Naive thymus-derived CD4-positive, alpha-beta T cell (primary cell): ENCODE measurements at regions of chr2 and their contacts with region 1.

Region 1: GRCh38 chr2:231604685-231605606 is 12.3 kb downstream of the TEX44 start:
- DNase-seq: peak; percentile 80 to 97 (median 88)
- ATAC-seq: peak; percentile 89
- H3K4me3 ChIP-seq: peak overlapping the region; percentile 36
- H3K4me3 Mint-ChIP-seq: peak overlapping the region; percentile 58 to 77 (median 72)
- H3K27ac ChIP-seq: peak overlapping the region; percentile 89
- H3K27ac Mint-ChIP-seq: peak overlapping the region in 8 of 9 donors; percentile 50 to 93 (median 90)
- H3K4me1 ChIP-seq: peaks cover 0 to 9% of the 10 kb centered on the region in 2 donors
- H3K4me1 Mint-ChIP-seq: peaks cover 0 to 14% (median 4%) of the 10 kb centered on the region in 7 donors
- H3K27me3 ChIP-seq: no peaks in the 10 kb centered on the region
- H3K27me3 Mint-ChIP-seq: peaks cover 0 to 9% (median 0%) of the 10 kb centered on the region in 5 donors

Region 2: DNA sequence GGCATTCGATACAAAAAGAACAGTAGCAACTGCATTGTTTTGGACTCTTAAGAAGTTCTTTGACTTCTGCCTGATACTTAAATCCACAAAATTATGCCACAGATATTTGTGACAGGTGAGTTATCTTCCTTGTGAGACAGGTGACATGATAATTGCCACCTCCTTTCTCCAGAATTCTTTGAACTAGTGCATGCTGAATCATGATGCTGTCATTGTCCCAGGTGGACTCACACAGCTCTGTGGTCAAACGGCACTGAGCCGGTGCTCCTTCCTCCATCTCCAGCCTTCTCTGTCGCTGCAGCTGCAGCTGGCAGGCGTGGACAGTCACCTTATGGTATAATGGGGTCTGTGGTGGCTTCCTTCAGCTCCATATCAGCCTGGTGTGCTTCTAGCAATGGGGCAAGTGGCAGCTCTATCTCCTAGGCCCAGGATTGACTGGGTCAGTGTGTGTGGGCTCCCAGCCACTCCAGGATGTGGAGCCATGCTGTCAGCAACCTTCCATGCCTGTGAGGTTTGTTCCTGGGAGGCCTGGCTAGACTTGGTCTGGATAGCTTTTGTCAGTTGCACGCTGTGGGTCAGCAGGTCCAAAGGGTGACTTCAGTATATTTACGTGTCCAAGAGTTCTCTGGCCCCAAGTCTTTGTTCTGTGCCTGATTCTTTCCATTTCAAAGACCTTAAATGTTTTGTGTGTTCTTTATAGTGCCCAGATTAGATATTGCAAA is 390.9 kb before region 1 on chr2:
- CTCF ChIA-PET with region 1: no interaction called
- POLR2A ChIA-PET with region 1: no interaction called
- intact Hi-C with region 1: no loop called
- DNase-seq: no peak
- ATAC-seq: no peak
- H3K4me3 ChIP-seq: no peak overlapping the region
- H3K4me3 Mint-ChIP-seq: no peak overlapping the region
- H3K27ac ChIP-seq: no peak overlapping the region
- H3K27ac Mint-ChIP-seq: no peak overlapping the region
- H3K4me1 ChIP-seq: no peaks in the 10 kb centered on the region
- H3K4me1 Mint-ChIP-seq: no peaks in the 10 kb centered on the region
- H3K27me3 ChIP-seq: no peaks in the 10 kb centered on the region
- H3K27me3 Mint-ChIP-seq: no peaks in the 10 kb centered on the region

Region 3: GRCh38 chr2:231227309-231228162 is 377.4 kb before region 1 on chr2:
- CTCF ChIA-PET with region 1: no interaction called
- POLR2A ChIA-PET with region 1: no interaction called
- intact Hi-C with region 1: loop called in 1 of 2 experiments (anchors 1 kb)
- DNase-seq: peak in 8 of 9 donors; percentile 21 to 55 (median 34)
- ATAC-seq: peak; percentile 95
- H3K4me3 ChIP-seq: no peak overlapping the region
- H3K4me3 Mint-ChIP-seq: no peak overlapping the region
- H3K27ac ChIP-seq: no peak overlapping the region
- H3K27ac Mint-ChIP-seq: peak overlapping the region in 1 of 9 donors; percentile 5
- H3K4me1 ChIP-seq: no peaks in the 10 kb centered on the region
- H3K4me1 Mint-ChIP-seq: no peaks in the 10 kb centered on the region
- H3K27me3 ChIP-seq: peaks cover 0 to 3% of the 10 kb centered on the region in 2 donors
- H3K27me3 Mint-ChIP-seq: no peaks in the 10 kb centered on the region

Region 4: GRCh38 chr2:231394211-231395141 is 210.5 kb before region 1 on chr2:
- CTCF ChIA-PET with region 1: no interaction called
- POLR2A ChIA-PET with region 1: no interaction called
- intact Hi-C with region 1: no loop called
- DNase-seq: no peak
- ATAC-seq: peak; percentile 46
- H3K4me3 ChIP-seq: no peak overlapping the region
- H3K4me3 Mint-ChIP-seq: peak overlapping the region; percentile 37 to 75 (median 60)
- H3K27ac ChIP-seq: no peak overlapping the region
- H3K27ac Mint-ChIP-seq: no peak overlapping the region
- H3K4me1 ChIP-seq: peaks cover 0 to 10% of the 10 kb centered on the region in 2 donors
- H3K4me1 Mint-ChIP-seq: peaks cover 0 to 29% (median 8%) of the 10 kb centered on the region in 7 donors
- H3K27me3 ChIP-seq: no peaks in the 10 kb centered on the region
- H3K27me3 Mint-ChIP-seq: peaks cover 18 to 56% (median 23%) of the 10 kb centered on the region in 5 donors

Region 5: GRCh38 chr2:231482806-231483391 is 122.0 kb before region 1 on chr2:
- CTCF ChIA-PET with region 1: no interaction called
- POLR2A ChIA-PET with region 1: interaction called, 3 read pairs
- intact Hi-C with region 1: loop called (anchors 1 kb)
- DNase-seq: peak; percentile 52 to 82 (median 70)
- ATAC-seq: peak; percentile 86
- H3K4me3 ChIP-seq: peak overlapping the region; percentile 73
- H3K4me3 Mint-ChIP-seq: peak overlapping the region; percentile 62 to 87 (median 82)
- H3K27ac ChIP-seq: peak overlapping the region; percentile 83
- H3K27ac Mint-ChIP-seq: peak overlapping the region; percentile 81 to 96 (median 89)
- H3K4me1 ChIP-seq: peaks cover 0 to 4% of the 10 kb centered on the region in 2 donors
- H3K4me1 Mint-ChIP-seq: peaks cover 0 to 18% (median 11%) of the 10 kb centered on the region in 7 donors
- H3K27me3 ChIP-seq: no peaks in the 10 kb centered on the region
- H3K27me3 Mint-ChIP-seq: no peaks in the 10 kb centered on the region

Region 6: GRCh38 chr2:231530091-231531011 is 74.6 kb before region 1 on chr2 and contains the start of gene NMUR1:
- CTCF ChIA-PET with region 1: no interaction called
- POLR2A ChIA-PET with region 1: no interaction called
- intact Hi-C with region 1: loop called in 1 of 2 experiments (anchors 1 kb)
- DNase-seq: peak; percentile 33 to 86 (median 59)
- ATAC-seq: peak; percentile 95
- H3K4me3 ChIP-seq: peak within 1 kb of the TSS; percentile 33
- H3K4me3 Mint-ChIP-seq: peak within 1 kb of the TSS in 9 of 10 donors; percentile 29 to 83 (median 50)
- H3K27ac ChIP-seq: no peak within 1 kb of the TSS
- H3K27ac Mint-ChIP-seq: peak within 1 kb of the TSS in 3 of 9 donors; percentile 21 to 60 (median 36)
- H3K4me1 ChIP-seq: peaks cover 0 to 20% of the 10 kb centered on the region in 2 donors
- H3K4me1 Mint-ChIP-seq: peaks cover 0 to 28% (median 7%) of the 10 kb centered on the region in 7 donors
- H3K27me3 ChIP-seq: no peaks in the 10 kb centered on the region
- H3K27me3 Mint-ChIP-seq: peaks cover 15 to 39% (median 18%) of the 10 kb centered on the region in 5 donors
- total RNA-seq, gene NMUR1: 0.72 to 7.0 (median 1.4) TPM in 3 of 5 experiments, not detected in the others

Region 7: DNA sequence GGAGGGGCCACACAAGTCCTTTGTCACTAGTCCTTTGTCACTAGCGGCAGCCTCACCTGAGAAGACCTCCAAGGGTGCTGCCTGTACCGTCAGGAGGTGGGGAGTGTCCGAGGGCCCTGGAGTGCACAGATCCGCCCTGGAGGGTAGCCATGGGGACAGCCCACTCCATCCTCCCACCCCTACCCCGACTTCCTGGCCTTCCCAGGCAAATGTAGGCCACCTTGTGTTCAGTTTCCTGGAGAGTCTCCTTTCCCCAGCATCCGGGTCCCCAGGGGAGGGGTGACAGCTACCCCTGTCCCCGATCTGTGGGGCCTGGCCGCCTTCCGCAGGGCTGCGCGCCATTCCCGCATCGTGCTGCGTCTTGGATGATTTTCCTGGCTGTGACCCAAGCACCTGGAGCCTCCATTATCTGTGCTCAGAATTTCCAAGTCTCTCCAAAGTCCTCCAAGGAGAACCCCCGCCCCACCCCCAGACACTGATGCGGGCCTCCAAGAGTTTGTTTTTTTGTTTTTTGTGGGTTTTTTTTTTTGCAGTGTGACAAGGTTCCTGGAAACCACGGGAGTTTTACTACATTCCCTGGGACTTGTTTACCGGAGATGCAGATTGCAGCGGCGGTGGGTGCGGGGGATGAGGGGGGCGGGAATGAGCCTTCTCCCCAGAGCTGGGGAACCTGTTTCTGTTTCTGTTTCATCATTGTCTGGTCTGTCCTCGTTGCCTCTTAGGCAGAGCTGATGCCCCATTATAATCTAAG is 16.4 kb after region 1 on chr2:
- CTCF ChIA-PET with region 1: no interaction called
- POLR2A ChIA-PET with region 1: no interaction called
- intact Hi-C with region 1: no loop called
- DNase-seq: no peak
- ATAC-seq: no peak
- H3K4me3 ChIP-seq: no peak overlapping the region
- H3K4me3 Mint-ChIP-seq: peak overlapping the region in 1 of 10 donors; percentile 44
- H3K27ac ChIP-seq: no peak overlapping the region
- H3K27ac Mint-ChIP-seq: peak overlapping the region in 1 of 9 donors; percentile 85
- H3K4me1 ChIP-seq: no peaks in the 10 kb centered on the region
- H3K4me1 Mint-ChIP-seq: peaks cover 0 to 54% (median 12%) of the 10 kb centered on the region in 7 donors
- H3K27me3 ChIP-seq: no peaks in the 10 kb centered on the region
- H3K27me3 Mint-ChIP-seq: no peaks in the 10 kb centered on the region

Region 8: DNA sequence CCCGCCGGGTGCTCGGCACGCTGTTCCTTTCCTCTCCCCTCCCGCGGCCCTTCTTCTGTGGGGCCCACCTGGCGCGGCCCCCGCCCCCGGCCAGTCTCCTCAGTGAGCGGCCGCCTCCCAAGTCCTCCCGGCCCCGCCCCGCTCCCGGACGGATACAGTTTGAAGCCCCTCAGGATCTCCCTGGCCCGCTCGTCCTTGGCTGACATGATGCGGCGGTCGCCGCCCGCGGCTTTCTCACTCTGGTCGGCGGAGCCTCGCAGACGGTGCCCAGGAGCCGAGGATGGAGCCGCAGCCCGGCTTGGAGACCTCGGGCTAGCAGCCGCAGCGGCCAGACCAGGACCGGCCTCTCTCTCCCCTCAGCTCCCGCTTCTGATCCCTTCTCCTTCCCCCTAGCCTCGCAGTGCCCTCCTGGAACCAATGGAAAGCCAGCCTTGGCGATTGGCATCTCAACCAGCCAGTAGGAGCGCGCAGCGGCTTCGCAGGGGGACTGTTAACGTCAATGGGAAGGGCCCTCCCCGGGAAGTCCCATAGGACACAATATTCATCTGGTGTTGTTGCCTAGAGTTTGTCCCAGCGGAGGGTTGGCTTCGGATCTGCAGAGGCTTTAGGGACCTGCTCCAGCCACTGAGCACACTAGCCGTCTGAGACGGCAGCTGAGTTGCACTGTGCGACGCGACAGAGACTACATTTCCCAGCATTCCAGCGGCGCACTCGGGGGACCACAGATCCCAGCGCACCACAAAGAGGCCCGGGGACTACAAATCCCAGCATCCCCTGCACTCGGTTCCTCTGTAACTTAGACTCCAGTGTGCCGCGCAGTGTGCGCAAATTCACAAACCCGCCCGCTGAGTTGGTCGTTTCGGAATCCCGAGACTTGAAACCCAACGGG is 176.2 kb after region 1 on chr2 and contains the start of gene PDE6D:
- CTCF ChIA-PET with region 1: no interaction called
- POLR2A ChIA-PET with region 1: no interaction called
- intact Hi-C with region 1: loop called (anchors 1 to 2 kb)
- DNase-seq: peak; percentile 90 to 98 (median 94)
- ATAC-seq: peak; percentile 94
- H3K4me3 ChIP-seq: peak within 1 kb of the TSS; percentile 100
- H3K4me3 Mint-ChIP-seq: peak within 1 kb of the TSS; percentile 85 to 99 (median 98)
- H3K27ac ChIP-seq: peak within 1 kb of the TSS; percentile 82
- H3K27ac Mint-ChIP-seq: peak within 1 kb of the TSS; percentile 90 to 98 (median 94)
- H3K4me1 ChIP-seq: peaks cover 26 to 30% of the 10 kb centered on the region in 2 donors
- H3K4me1 Mint-ChIP-seq: peaks cover 45 to 76% (median 57%) of the 10 kb centered on the region in 7 donors
- H3K27me3 ChIP-seq: no peaks in the 10 kb centered on the region
- H3K27me3 Mint-ChIP-seq: peaks cover 0 to 5% (median 0%) of the 10 kb centered on the region in 5 donors
- total RNA-seq, gene PDE6D: 14.3 to 35.7 (median 25.2) TPM